ENCODE measurements at regions of chr2 and their contacts with region 1.

Region 1: DNA sequence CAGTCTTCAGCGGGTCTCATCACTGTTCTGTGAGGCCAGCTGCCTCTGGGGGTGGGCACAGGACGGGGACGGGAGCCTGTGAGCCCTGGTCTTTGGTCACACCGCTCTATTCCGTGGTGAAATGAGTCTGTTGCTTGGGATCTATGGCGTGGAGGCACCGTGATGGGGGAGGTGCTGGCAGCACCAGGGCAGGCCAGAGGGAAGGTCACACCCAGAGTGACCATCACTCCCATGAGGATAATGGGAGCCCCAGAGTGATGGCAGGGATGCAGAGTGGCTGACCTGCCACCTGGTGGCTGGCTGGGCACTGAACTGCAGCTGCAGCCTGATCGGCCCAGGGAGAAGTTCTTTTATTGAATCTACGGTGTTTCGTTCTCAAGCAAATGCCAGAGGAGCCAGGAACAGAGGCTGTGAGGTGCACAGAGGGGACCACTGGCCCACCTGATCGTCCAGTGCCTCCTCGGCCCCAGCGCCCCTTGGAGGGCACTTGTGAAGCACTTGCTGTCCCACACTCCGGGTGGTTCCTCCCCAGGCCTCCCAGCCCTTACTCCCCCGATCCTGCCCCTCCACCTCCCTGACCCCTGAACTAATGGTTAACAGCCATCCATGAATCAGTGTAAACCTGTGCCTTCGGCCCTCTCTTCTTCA is 17.9 kb downstream of the KCNIP3 start:
- DNase-seq: peak; percentile 51
- ATAC-seq: peak; percentile 52

Region 2: GRCh38 chr2:95231723-95232122 is 83.4 kb before region 1 on chr2:
- intact Hi-C with region 1: loop called (anchors 5 kb)
- DNase-seq: no peak
- ATAC-seq: no peak

Measured in Right ventricle myocardium inferior (tissue), 1 donor.